Transverse colon (tissue), 4 donors: ENCODE measurements at regions of chr15 and their contacts with region 1.

Region 1: GRCh38 chr15:74635228-74635627 is 19.6 kb downstream of the CLK3 start:
- DNase-seq: peak; percentile 77
- H3K4me3 ChIP-seq: no peak overlapping the region
- H3K27ac ChIP-seq: no peak overlapping the region
- H3K4me1 ChIP-seq: no peaks in the 10 kb centered on the region
- H3K27me3 ChIP-seq: no peaks in the 10 kb centered on the region
- CTCF ChIP-seq: peak; percentile 80 to 94 (median 87)
- EP300 ChIP-seq: no peak
- POLR2A ChIP-seq: no peak

Region 2: GRCh38 chr15:74228723-74229081 is 406.5 kb before region 1 on chr15:
- in situ Hi-C with region 1: no loop called
- intact Hi-C with region 1: no loop called
- DNase-seq: no peak
- H3K4me3 ChIP-seq: no peak overlapping the region
- H3K27ac ChIP-seq: peak overlapping the region in 1 of 4 donors; percentile 23
- H3K4me1 ChIP-seq: peaks cover 6 to 14% (median 10%) of the 10 kb centered on the region in 4 donors
- H3K27me3 ChIP-seq: no peaks in the 10 kb centered on the region
- CTCF ChIP-seq: no peak
- EP300 ChIP-seq: no peak
- POLR2A ChIP-seq: no peak

Region 3: DNA sequence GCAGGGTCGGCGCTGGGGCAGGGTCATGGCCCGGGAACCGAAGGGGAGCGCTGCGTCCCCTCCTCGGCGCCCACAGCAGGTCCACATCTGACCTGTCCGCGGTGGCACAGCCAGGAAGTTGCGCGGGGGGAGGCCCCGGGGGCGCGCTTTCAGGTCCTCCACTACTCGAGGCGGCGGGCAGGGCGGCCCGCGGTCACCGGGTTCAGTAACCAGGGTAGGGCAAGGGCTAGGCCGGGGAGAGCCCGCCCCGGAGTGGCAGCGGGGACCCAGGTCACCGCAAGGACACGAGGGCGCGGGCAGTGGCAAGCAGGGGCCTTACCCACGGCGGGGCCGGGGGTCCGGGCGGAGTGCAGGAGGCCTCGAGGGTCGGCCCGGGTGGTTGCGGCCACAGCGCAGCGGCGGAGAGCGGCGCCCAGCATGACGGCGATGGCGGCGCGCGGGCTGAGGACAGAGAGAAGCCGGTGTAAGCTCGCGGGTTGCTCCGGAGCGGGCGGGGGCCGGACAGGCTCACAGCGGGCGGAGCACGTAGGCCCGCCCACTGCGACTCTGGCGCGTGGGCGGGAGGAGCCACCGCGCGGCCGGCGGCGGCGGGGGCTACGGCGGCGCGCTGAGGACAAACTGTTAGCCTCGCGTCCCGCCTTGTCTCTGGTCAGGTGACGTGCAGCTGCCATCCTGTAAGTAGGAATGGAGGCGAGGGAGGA is 302.5 kb after region 1 on chr15 and contains the start of gene COX5A:
- in situ Hi-C with region 1: loop called in 2 of 4 experiments (anchors 25 kb)
- intact Hi-C with region 1: loop called (anchors 10 kb)
- DNase-seq: peak; percentile 94
- H3K4me3 ChIP-seq: peak within 1 kb of the TSS; percentile 70 to 89 (median 80)
- H3K27ac ChIP-seq: peak within 1 kb of the TSS; percentile 97 to 99 (median 98)
- H3K4me1 ChIP-seq: peaks cover 10 to 47% (median 35%) of the 10 kb centered on the region in 4 donors
- H3K27me3 ChIP-seq: no peaks in the 10 kb centered on the region
- CTCF ChIP-seq: peak in 2 of 5 experiments; percentile 21 to 35
- EP300 ChIP-seq: no peak
- POLR2A ChIP-seq: peak; percentile 96
- total RNA-seq, gene COX5A: 135 to 437 (median 219) TPM

Region 4: GRCh38 chr15:74950078-74951000 is 315.1 kb after region 1 on chr15:
- in situ Hi-C with region 1: loop called in 3 of 4 experiments (anchors 25 kb)
- intact Hi-C with region 1: loop called (anchors 10 kb)
- DNase-seq: peak; percentile 84
- H3K4me3 ChIP-seq: no peak overlapping the region
- H3K27ac ChIP-seq: no peak overlapping the region
- H3K4me1 ChIP-seq: peaks cover 13 to 19% (median 15%) of the 10 kb centered on the region in 4 donors
- H3K27me3 ChIP-seq: no peaks in the 10 kb centered on the region
- CTCF ChIP-seq: peak; percentile 96 to 99 (median 99)
- EP300 ChIP-seq: no peak
- POLR2A ChIP-seq: no peak

Region 5: DNA sequence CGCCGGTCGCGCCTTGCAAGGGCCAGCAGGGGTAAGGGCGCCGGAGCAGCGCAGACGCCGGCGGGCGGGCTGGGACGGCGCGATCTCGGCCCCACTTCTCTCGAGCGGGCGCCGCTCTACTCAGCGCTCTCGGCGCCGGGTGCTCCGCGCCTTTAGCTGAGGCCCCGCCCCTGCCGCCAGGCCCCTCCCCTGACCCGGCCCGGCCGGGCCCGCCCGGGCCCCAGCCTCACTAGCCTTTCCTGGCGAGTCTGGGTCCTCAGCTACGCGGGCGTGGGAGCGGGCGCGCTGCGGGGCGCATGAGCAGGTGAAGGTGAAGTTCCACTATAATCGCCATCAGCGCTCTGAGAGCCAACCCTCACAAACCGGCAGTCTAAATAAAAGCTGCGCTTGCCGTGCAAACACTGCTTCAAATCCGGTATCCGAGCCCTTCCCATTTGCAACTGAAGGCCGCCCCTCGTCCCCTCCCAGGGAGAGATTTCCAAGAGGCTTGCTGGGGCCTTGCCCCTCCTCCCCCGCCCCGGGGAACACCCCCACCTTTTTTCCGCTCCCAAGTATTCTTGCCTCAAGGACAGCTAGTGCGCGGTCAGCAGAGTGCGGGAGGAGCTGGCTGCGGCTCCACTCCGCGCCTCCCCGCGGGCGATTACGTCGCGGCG is 321.5 kb after region 1 on chr15 and contains the start of gene RPP25:
- in situ Hi-C with region 1: loop called in 1 of 4 experiments (anchors 25 kb)
- intact Hi-C with region 1: no loop called
- DNase-seq: peak; percentile 91
- H3K4me3 ChIP-seq: peak within 1 kb of the TSS; percentile 48 to 63 (median 57)
- H3K27ac ChIP-seq: peak within 1 kb of the TSS; percentile 86 to 93 (median 90)
- H3K4me1 ChIP-seq: peaks cover 19 to 68% (median 49%) of the 10 kb centered on the region in 4 donors
- H3K27me3 ChIP-seq: peaks cover 24% of the 10 kb centered on the region
- CTCF ChIP-seq: no peak
- EP300 ChIP-seq: no peak
- POLR2A ChIP-seq: peak; percentile 82
- total RNA-seq, gene RPP25: 10.1 to 28.4 (median 16.5) TPM